Left ventricle myocardium superior (tissue), 1 donor: ENCODE measurements at regions of chr20 and their contacts with region 1.

Region 1: DNA sequence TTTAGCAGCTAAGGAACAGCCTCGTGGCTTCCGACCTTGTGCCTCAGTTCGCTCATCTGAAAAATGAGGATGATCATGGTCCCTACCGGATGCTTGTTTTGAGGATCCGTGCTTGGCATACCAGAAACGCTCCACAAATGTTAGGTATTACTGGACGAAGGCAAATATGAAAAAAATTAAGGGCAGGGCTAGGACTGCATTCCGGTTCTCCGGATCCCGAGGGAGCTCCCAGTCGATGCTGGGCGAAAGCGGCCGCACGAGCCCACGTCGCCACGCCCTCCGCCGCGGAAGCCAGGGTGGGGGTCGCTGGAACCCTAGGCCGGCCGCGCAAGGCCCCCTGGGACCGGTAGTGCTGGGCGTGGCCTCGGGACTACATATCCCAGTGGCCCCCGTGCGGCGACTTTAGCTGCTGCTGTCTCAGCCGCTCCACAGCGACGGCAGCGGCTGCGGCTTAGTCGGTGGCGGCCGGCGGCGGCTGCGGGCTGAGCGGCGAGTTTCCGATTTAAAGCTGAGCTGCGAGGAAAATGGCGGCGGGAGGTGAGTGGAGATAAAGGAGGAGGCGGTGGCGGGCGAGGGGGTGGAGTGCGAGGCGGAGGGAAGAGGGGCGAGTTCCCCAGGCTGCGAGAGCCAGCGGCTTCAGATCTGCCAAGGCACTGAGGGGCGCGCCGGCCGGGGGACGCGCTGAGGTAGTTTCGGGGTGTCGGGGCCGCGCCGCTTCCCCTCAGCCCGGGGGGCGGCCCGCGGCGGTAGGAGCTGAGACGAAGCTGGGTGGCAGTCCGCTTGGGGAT is at the start of gene NCOA3:
- DNase-seq: peak; percentile 99
- ATAC-seq: peak; percentile 98
- total RNA-seq, gene NCOA3: 23.3 TPM

Region 2: GRCh38 chr20:47576516-47577033 is 74.9 kb after region 1 on chr20:
- intact Hi-C with region 1: loop called (anchors 10 kb)
- DNase-seq: peak; percentile 52
- ATAC-seq: peak; percentile 92

Region 3: DNA sequence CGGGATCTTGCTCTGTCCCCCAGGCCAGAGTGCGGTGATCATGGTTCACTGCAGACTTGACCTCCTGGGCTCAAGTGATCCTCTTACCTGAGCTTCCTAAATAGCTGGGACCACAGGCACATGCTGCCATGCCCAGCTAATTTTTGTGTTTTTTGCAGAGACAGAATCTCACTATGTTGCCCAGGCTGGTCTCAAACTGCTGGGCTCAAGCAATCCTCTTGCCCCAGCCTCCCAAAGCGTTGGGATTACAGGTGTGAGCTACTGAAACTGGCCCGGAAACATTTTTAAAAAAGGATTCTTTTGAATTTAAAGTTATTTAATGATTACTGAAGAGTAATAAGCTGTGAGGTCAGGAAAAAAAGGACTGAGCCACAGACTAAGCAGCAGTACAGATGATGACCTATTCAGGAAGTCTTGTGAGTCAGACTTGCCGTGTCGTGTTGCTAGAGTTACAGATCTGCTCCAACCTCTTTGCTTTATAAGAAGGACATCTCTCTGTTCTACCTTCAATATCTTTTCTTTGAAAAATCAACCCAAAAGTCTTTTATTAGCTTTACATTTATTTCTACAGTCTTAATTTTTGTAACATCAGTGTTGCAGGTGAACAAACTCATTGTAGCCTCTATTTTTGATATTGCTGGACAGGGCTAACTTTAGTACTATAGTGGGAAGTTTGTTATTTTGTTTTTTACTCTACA is 108.7 kb after region 1 on chr20:
- intact Hi-C with region 1: loop called (anchors 10 kb)
- DNase-seq: no peak
- ATAC-seq: peak; percentile 66